Sigmoid colon (tissue), 7 donors: ENCODE measurements at regions of chr1 and their contacts with region 1.

Region 1: DNA sequence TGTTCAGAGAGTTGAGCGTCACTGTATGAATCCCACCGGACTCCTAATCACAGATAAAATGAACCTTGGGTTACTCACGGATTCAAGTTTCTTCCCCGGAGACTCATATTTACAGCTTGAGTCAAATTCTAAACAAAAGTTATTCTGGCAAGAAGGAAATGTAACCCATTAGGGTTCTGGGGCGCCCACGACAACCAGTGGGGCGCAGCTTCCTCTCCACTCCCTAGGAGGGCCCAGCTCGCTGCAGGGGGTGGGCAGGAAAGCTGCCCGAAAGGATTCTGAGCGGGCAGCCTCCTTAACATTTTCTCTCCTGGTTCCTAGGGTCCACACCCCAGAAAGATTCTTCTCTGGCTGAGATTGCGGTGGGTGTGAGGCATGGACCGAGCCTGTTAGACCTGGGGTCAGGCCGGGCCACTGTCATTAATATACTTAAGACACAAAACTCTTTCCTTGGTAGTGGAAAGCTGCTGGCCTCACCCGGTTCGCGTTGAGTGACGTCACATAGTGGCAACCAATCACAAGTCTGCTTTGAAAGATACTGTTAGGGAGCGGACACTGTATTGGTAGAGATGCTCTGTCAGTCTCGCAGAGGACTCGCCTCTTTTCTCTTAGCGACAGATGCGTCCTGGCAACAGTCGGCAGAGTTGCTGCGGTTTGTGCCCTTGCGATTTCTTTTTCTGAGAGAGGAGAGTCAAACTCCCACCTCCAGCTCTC is 13.6 kb upstream of the MCOLN3 start:
- DNase-seq: peak; percentile 97
- H3K4me3 ChIP-seq: peak overlapping the region; percentile 23 to 60 (median 54)
- H3K27ac ChIP-seq: peak overlapping the region; percentile 33 to 79 (median 74)
- H3K4me1 ChIP-seq: peaks cover 0 to 10% (median 4%) of the 10 kb centered on the region in 4 donors
- H3K27me3 ChIP-seq: no peaks in the 10 kb centered on the region
- CTCF ChIP-seq: no peak
- EP300 ChIP-seq: no peak
- POLR2A ChIP-seq: no peak

Region 2: DNA sequence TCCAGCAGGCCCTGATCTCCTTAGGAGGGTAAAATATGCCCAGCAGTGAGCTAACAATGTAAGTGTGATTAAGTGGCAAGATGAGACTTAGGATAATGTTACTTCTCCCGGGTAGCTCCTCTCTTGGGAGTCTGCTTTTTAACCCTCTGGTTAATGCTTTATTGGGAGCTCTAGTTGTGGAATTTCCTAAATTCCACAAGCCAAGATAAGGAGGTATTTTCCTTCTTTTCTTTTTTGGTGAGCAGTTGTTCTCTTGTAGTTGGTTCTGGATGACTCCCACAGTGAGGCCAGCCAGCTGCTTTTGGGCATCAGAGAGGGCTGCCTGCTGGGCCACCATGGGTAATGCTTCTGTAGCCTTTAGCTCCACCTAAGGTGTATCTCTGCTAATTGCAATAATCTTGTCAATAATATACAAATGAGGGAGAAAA is 178.3 kb after region 1 on chr1:
- intact Hi-C with region 1: loop called (anchors 5 kb)
- DNase-seq: no peak
- H3K4me3 ChIP-seq: no peak overlapping the region
- H3K27ac ChIP-seq: peak overlapping the region; percentile 41 to 72 (median 62)
- H3K4me1 ChIP-seq: peaks cover 0 to 43% (median 38%) of the 10 kb centered on the region in 4 donors
- H3K27me3 ChIP-seq: no peaks in the 10 kb centered on the region
- CTCF ChIP-seq: peak in 1 of 4 experiments; percentile 10
- EP300 ChIP-seq: no peak
- POLR2A ChIP-seq: no peak

Region 3: DNA sequence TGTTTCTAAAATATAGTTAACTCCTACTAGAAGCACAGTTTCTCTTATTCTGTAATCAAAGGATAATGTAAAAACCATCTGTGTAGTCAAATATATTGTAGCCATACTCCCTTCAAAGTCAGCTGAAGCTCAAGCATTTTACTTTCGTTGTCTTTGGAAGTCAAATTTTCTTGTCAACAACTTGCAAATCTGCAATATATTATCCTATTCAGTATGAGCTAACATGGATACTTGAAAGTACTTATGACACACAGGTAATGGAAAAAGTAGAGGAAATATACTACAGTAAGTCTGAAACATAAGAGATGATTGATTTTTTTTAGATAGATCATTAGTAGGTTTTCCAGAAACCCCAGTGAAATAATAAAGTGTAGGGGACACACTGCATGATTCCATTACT is 973.2 kb after region 1 on chr1:
- intact Hi-C with region 1: no loop called
- DNase-seq: no peak
- H3K4me3 ChIP-seq: no peak overlapping the region
- H3K27ac ChIP-seq: no peak overlapping the region
- H3K4me1 ChIP-seq: no peaks in the 10 kb centered on the region
- H3K27me3 ChIP-seq: no peaks in the 10 kb centered on the region
- CTCF ChIP-seq: no peak
- EP300 ChIP-seq: no peak
- POLR2A ChIP-seq: no peak